Caco-2 (cell line): ENCODE measurements at regions of chr4 and their contacts with region 1.

Region 1: GRCh38 chr4:121192480-121192879 is 28.4 kb upstream of the TNIP3 start:
- DNase-seq: peak in 1 of 2 experiments; percentile 31
- H3K4me3 ChIP-seq: no peak overlapping the region
- H3K4me3 Mint-ChIP-seq: no peak overlapping the region
- H3K27ac Mint-ChIP-seq: no peak overlapping the region
- H3K4me1 ChIP-seq: no peaks in the 10 kb centered on the region
- H3K4me1 Mint-ChIP-seq: no peaks in the 10 kb centered on the region
- H3K27me3 ChIP-seq: no peaks in the 10 kb centered on the region
- H3K27me3 Mint-ChIP-seq: no peaks in the 10 kb centered on the region
- CTCF ChIP-seq: peak; percentile 49 to 73

Region 2: DNA sequence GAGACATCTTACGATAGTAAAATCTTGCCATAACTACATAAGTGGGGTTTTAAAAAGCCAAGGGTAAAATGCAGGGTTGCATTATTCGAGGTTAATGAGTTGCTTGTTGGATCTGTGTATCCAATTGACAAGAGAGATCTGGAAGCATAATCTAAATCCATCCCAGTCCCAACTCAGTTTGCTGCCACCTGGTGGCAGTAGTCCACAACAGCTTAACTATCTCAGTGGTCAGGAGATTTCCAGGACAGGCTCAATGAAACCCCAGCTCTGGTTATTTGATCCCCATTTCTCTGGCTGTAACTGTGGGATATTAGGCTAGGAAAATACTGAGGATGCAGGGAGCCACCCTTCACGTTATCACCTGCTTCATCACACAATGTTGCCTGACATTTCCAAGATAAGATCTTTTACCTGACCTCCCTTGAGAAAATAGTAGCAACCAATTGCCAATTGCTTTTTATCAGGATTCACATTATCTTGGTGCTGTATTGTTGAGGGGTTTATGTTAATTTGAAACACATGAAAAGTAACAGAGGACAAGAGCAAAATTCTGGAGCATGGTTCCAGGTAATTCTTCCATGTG is 59.8 kb after region 1 on chr4:
- CTCF ChIA-PET with region 1: interaction called, 15 read pairs
- POLR2A ChIA-PET with region 1: no interaction called
- intact Hi-C with region 1: loop called (anchors 1 kb)
- DNase-seq: peak; percentile 69
- H3K4me3 ChIP-seq: no peak overlapping the region
- H3K4me3 Mint-ChIP-seq: no peak overlapping the region
- H3K27ac Mint-ChIP-seq: no peak overlapping the region
- H3K4me1 ChIP-seq: peaks cover 4% of the 10 kb centered on the region; the same call in 1 of the 2 replicates
- H3K4me1 Mint-ChIP-seq: no peaks in the 10 kb centered on the region
- H3K27me3 ChIP-seq: no peaks in the 10 kb centered on the region
- H3K27me3 Mint-ChIP-seq: no peaks in the 10 kb centered on the region
- CTCF ChIP-seq: peak; percentile 63 to 74

Region 3: DNA sequence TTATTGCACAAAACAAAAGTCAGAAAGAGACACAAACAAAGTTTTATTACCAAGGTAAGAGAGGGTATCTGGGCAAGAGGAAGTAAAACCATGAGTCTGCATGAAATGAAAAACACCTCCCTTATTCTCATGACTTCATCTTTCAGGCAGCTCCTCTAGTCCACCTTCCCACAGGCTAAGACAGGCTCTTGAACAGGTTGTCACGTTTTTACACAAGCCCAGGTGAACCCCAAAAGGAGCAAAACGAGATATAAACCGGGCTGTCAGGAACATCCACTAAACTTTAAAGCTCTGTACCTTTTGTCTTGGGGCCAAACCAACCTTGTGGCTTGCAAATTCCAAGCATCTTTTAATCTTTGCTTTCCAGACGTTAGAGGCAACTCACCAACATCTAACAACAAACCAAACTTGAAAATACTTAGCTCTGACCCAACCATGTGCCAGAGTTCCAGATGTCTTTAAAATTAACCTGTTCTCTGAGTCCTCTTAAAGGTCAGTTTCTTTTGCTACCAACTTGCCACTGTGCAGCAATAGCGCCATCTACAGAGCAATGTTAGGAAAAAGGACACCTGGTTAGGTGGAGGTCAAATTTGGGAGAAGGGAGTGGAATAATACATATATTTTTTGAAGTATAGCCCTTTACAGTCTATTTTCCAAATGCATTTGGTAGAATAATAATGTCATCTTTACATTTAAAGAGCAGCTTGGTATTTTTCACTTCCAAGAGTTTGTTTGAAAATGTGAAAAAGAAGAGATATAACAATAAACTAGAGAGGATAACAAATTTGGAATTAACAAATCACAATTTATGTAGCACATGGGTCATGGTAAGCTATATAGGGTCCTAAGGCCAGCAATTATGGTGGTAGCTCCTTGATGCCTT is 115.2 kb after region 1 on chr4:
- CTCF ChIA-PET with region 1: interaction called, 7 read pairs
- POLR2A ChIA-PET with region 1: no interaction called
- intact Hi-C with region 1: loop called (anchors 1 kb)
- DNase-seq: peak; percentile 56 to 62
- H3K4me3 ChIP-seq: no peak overlapping the region
- H3K4me3 Mint-ChIP-seq: no peak overlapping the region
- H3K27ac Mint-ChIP-seq: peak overlapping the region; percentile 20
- H3K4me1 ChIP-seq: peaks cover 38% of the 10 kb centered on the region
- H3K4me1 Mint-ChIP-seq: peaks cover 20% of the 10 kb centered on the region
- H3K27me3 ChIP-seq: no peaks in the 10 kb centered on the region
- H3K27me3 Mint-ChIP-seq: no peaks in the 10 kb centered on the region
- CTCF ChIP-seq: peak; percentile 72 to 86

Region 4: GRCh38 chr4:121736735-121737351 is 544.4 kb after region 1 on chr4:
- CTCF ChIA-PET with region 1: interaction called, 3 read pairs
- POLR2A ChIA-PET with region 1: no interaction called
- intact Hi-C with region 1: loop called (anchors 2 kb)
- DNase-seq: peak; percentile 47 to 70
- H3K4me3 ChIP-seq: no peak overlapping the region
- H3K4me3 Mint-ChIP-seq: no peak overlapping the region
- H3K27ac Mint-ChIP-seq: no peak overlapping the region
- H3K4me1 ChIP-seq: no peaks in the 10 kb centered on the region
- H3K4me1 Mint-ChIP-seq: peaks cover 9% of the 10 kb centered on the region
- H3K27me3 ChIP-seq: no peaks in the 10 kb centered on the region
- H3K27me3 Mint-ChIP-seq: peaks cover 3% of the 10 kb centered on the region
- CTCF ChIP-seq: peak; percentile 49 to 57